SK-N-SH (cell line): ENCODE measurements at regions of chr2 and their contacts with region 1.

Region 1: GRCh38 chr2:30208452-30208851 is 22.9 kb upstream of the LBH start:
- DNase-seq: peak; percentile 81
- H3K4me3 ChIP-seq: no peak overlapping the region
- H3K27ac ChIP-seq: no peak overlapping the region
- H3K4me1 ChIP-seq: peaks cover 0 to 10% of the 10 kb centered on the region in 2 experiments; a peak in 2 of 4 replicates
- H3K27me3 ChIP-seq: no peaks in the 10 kb centered on the region; the same call in 1 of the 2 replicates
- CTCF ChIP-seq: peak; percentile 99
- EP300 ChIP-seq: no peak
- RAD21 ChIP-seq: peak; percentile 100

Region 2: GRCh38 chr2:30193104-30193681 is 15.3 kb before region 1 on chr2:
- CTCF ChIA-PET with region 1: interaction called, 15 read pairs
- POLR2A ChIA-PET with region 1: no interaction called
- DNase-seq: no peak
- H3K4me3 ChIP-seq: no peak overlapping the region
- H3K27ac ChIP-seq: no peak overlapping the region
- H3K4me1 ChIP-seq: peaks cover 0 to 6% of the 10 kb centered on the region in 2 experiments; a peak in 1 of 4 replicates
- H3K27me3 ChIP-seq: no peaks in the 10 kb centered on the region; the same call in 1 of the 2 replicates
- CTCF ChIP-seq: no peak
- EP300 ChIP-seq: no peak
- RAD21 ChIP-seq: no peak

Region 3: GRCh38 chr2:30231212-30231995 is 23.0 kb after region 1 on chr2 and contains the start of gene LBH:
- CTCF ChIA-PET with region 1: interaction called, 76 read pairs
- POLR2A ChIA-PET with region 1: no interaction called
- DNase-seq: peak; percentile 98
- H3K4me3 ChIP-seq: peak within 1 kb of the TSS; percentile 73 to 92
- H3K27ac ChIP-seq: peak within 1 kb of the TSS; percentile 43 to 62; a peak in 3 of 4 replicates
- H3K4me1 ChIP-seq: peaks cover under 1 to 22% of the 10 kb centered on the region in 2 experiments; a peak in 2 of 4 replicates
- H3K27me3 ChIP-seq: no peaks in the 10 kb centered on the region
- CTCF ChIP-seq: no peak
- EP300 ChIP-seq: peak in 1 of 2 experiments; percentile 11; a peak in 1 of 4 replicates
- RAD21 ChIP-seq: no peak
- polyA plus RNA-seq, gene LBH: 22.8 and 26.4 TPM in 2 replicates

Region 4: GRCh38 chr2:30334762-30335363 is 126.4 kb after region 1 on chr2:
- CTCF ChIA-PET with region 1: interaction called, 14 read pairs
- POLR2A ChIA-PET with region 1: no interaction called
- DNase-seq: peak; percentile 42
- H3K4me3 ChIP-seq: no peak overlapping the region
- H3K27ac ChIP-seq: no peak overlapping the region
- H3K4me1 ChIP-seq: peaks cover 0 to 11% of the 10 kb centered on the region in 2 experiments; a peak in 1 of 4 replicates
- H3K27me3 ChIP-seq: no peaks in the 10 kb centered on the region
- CTCF ChIP-seq: no peak
- EP300 ChIP-seq: peak in 1 of 2 experiments; percentile 25; a peak in 1 of 4 replicates
- RAD21 ChIP-seq: peak; percentile 54

Region 5: GRCh38 chr2:30475542-30475941 is 267.1 kb after region 1 on chr2:
- CTCF ChIA-PET with region 1: interaction called, 13 read pairs
- POLR2A ChIA-PET with region 1: no interaction called
- DNase-seq: no peak
- H3K4me3 ChIP-seq: no peak overlapping the region
- H3K27ac ChIP-seq: no peak overlapping the region
- H3K4me1 ChIP-seq: no peaks in the 10 kb centered on the region; a peak in 2 of 4 replicates
- H3K27me3 ChIP-seq: no peaks in the 10 kb centered on the region
- CTCF ChIP-seq: peak; percentile 42
- EP300 ChIP-seq: no peak
- RAD21 ChIP-seq: peak; percentile 28; the same call in 1 of the 2 replicates

Region 6: DNA sequence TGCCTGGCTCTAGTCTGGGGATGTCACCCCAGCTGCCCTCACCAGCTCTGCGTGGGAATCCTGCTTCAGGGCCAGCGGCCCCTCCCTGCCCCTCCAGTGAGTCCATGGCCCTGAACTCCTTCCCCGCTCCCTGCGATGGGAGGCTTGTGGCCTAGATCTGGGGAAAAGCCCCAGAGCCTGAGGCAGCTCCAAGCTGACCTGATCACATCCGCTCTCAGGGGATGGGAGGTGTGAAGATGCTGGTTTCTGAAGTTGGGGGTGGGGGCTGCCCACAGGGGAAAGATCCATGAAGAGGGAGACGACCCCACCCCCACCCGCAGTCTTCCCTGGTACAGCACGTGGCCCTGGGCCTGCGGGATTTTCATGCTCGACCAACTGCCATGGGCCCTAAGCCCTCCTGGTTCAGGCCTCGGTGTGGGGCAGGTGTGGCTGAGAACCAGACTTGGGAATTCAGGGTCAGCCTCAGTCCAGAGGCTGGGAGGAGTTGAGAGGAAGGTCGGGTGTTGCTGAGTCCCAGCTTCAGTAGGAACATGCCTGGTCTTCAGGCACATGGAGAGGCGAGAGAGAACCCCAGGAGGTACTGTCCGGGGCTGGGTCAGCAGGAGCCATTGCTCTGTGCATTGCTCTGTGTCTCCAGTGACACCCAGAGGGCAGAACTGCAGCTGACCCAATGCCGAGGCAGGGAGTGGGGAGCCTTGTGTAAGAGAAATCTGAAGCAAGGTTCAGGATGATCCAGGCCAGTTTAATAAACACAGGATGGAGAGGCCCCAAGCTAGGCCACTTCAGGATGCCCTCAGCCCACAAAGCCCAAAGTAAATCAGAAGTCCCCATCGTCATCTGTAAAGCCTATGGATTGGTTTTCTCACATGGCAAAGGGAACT is 483.7 kb after region 1 on chr2:
- CTCF ChIA-PET with region 1: interaction called, 40 read pairs
- POLR2A ChIA-PET with region 1: no interaction called
- DNase-seq: no peak
- H3K4me3 ChIP-seq: no peak overlapping the region
- H3K27ac ChIP-seq: no peak overlapping the region
- H3K4me1 ChIP-seq: peaks cover 0 to 15% of the 10 kb centered on the region in 2 experiments; a peak in 1 of 4 replicates
- H3K27me3 ChIP-seq: no peaks in the 10 kb centered on the region
- CTCF ChIP-seq: peak; percentile 29
- EP300 ChIP-seq: no peak
- RAD21 ChIP-seq: peak; percentile 51